Activated CD4-positive, alpha-beta T cell treated with anti-CD3 and anti-CD28 coated beads, Interleukin-2, amount 10 ng/mL, durations not matched to agents 24 days and 14 days (primary cell): ENCODE measurements at regions of chr13 and their contacts with region 1.

Region 1: GRCh38 chr13:45464687-45465453 is at the start of gene COG3:
- DNase-seq: peak; percentile 99
- H3K4me3 Mint-ChIP-seq: peak within 1 kb of the TSS; percentile 91
- H3K27ac Mint-ChIP-seq: peak within 1 kb of the TSS; percentile 86
- H3K4me1 Mint-ChIP-seq: peaks cover 37% of the 10 kb centered on the region
- H3K27me3 Mint-ChIP-seq: peaks cover 2% of the 10 kb centered on the region
- total RNA-seq, gene COG3: 20.1 and 20.7 TPM in 2 replicates

Region 2: GRCh38 chr13:45367358-45367757 is 97.5 kb before region 1 on chr13:
- intact Hi-C with region 1: loop called (anchors 1 kb)
- DNase-seq: peak; percentile 95
- H3K4me3 Mint-ChIP-seq: peak overlapping the region; percentile 76
- H3K27ac Mint-ChIP-seq: peak overlapping the region; percentile 95
- H3K4me1 Mint-ChIP-seq: peaks cover 54% of the 10 kb centered on the region
- H3K27me3 Mint-ChIP-seq: no peaks in the 10 kb centered on the region

Region 3: DNA sequence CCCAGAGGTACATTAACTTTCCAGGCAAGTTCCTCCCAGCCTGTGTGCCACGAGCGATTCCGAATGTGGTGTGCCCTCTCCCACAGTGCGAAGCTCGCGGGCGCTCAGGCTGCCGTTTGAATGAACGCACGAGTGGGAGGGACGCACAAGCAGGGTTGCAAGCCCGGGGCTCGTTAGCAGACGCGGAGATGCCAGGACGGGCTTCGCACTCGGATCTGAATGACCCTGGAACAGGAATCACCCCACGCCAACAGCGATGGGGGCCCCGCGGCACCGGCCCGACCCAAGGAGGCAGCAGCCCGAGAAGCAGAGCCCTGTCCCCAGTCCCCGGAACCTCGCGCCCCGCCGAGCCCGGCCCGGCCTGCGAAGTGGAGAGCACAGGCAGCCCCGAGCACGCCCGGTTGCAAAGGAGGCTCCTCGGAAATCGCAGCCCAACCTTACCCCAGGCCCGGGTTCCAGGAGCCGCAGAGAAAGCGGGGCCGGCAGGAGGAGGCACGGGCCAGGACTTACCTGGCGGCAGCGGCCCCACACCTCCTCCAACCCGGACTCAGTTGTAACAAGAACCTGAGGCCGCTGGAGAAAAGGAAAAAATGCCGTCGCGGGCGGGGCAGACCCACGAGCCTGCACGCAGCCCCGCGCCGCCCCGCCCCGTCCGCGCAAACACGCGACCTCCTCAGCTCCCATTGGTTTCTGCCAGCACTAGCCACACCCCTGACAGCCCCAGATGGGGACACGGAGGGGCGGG is 46.9 kb before region 1 on chr13 and contains the start of gene SLC25A30:
- intact Hi-C with region 1: loop called (anchors 1 kb)
- DNase-seq: peak; percentile 96
- H3K4me3 Mint-ChIP-seq: peak within 1 kb of the TSS; percentile 96
- H3K27ac Mint-ChIP-seq: peak within 1 kb of the TSS; percentile 94
- H3K4me1 Mint-ChIP-seq: peaks cover 19% of the 10 kb centered on the region
- H3K27me3 Mint-ChIP-seq: peaks cover 1% of the 10 kb centered on the region
- total RNA-seq, gene SLC25A30: 12.9 and 14.2 TPM in 2 replicates

Region 4: GRCh38 chr13:45441633-45442032 is 23.2 kb before region 1 on chr13:
- intact Hi-C with region 1: loop called (anchors 1 kb)
- DNase-seq: no peak
- H3K4me3 Mint-ChIP-seq: no peak overlapping the region
- H3K27ac Mint-ChIP-seq: peak overlapping the region; percentile 9
- H3K4me1 Mint-ChIP-seq: peaks cover 10% of the 10 kb centered on the region
- H3K27me3 Mint-ChIP-seq: peaks cover 8% of the 10 kb centered on the region

Region 5: DNA sequence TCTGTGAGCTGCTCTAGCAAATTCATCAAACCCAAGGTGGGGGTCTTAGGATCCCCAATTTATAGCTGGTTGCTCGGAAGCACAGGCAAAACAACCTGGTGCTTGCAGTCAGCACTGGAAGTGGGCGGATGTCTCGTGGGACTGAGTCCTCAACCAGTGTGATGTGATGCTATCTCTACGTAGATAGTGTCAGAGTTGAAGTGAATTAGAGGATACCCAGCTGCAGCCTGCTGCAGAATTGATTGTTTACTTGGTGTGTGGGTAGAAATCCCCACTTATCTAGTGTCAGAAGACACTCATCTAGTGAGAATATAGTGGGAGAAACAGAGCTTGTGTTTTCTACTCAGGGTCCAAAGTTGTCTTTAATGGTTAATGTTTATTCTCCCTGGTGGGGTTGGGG is 300.6 kb after region 1 on chr13:
- intact Hi-C with region 1: no loop called
- DNase-seq: no peak
- H3K4me3 Mint-ChIP-seq: no peak overlapping the region
- H3K27ac Mint-ChIP-seq: no peak overlapping the region
- H3K4me1 Mint-ChIP-seq: no peaks in the 10 kb centered on the region
- H3K27me3 Mint-ChIP-seq: peaks cover 8% of the 10 kb centered on the region